Panc1 (cell line): ENCODE measurements at regions of chr19 and their contacts with region 1.

Region 1: DNA sequence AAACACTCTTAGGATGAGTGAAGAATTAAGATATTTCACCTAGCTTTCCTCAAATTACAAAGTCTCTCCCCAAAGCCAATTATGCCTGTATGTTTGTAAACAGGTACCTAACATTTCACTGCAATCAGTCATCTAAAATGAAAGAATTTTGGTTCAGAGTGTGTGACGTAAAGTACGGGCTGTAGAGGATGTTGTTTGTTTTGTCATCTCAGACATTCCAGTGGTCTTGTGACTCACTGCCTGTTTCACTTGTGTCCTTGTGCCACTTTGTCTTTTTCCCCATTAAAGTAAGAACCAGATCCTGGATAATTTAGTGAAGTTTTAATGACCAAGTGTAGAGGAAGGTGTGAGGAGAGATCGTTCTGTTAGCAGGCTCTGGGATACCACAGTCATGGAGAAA is 28.6 kb upstream of the EID2 start:
- DNase-seq: peak; percentile 83
- ATAC-seq: peak; percentile 59
- H3K4me3 ChIP-seq: no peak overlapping the region
- H3K27ac ChIP-seq: no peak overlapping the region
- H3K4me1 ChIP-seq: 0 out of 2 replicates have a peak, but pooled peaks cover 5% of the 10 kb centered on the region
- H3K27me3 ChIP-seq: peaks cover 85% of the 10 kb centered on the region
- CTCF ChIP-seq: no peak

Region 2: DNA sequence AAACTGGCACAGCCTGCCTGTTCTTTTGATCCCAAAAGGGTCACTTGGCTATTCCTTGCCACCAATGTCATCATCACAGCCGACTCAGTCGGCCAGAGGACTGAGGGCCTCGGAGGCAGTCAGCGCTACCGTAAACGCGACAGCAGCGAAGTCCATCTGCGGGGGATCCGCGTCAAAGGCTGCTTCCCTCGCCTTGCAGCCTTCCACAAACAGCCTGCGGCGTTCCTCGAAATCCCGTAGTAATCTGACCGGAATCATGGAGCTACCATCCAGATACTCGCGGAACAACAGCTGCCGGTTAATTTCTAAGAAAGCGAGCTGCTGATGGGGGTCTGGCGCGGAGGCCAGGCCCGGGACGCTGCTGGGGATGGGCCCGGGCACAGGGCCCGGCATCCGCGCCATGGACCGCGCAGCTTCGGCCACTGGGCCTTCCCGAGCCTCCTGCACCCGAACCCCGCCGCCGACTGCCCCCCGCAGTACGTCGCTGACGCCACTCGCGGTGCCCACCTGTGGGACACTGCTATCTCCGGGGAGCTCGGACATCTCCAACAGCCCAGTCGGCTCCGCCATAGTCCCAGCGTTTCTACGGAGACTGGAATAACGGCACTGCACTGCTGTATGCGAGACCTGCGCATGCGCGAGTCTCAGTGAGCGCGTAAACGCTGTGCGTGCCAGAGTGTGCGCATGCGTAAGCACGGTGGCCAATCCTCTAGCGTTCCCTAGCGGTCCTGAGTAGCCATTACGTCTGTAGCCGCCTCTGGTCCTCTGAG is 36.2 kb before region 1 on chr19 and contains the start of gene EID2B:
- CTCF ChIA-PET with region 1: no interaction called
- POLR2A ChIA-PET with region 1: no interaction called
- in situ Hi-C with region 1: no loop called
- intact Hi-C with region 1: no loop called
- DNase-seq: peak; percentile 100
- ATAC-seq: peak; percentile 95
- H3K4me3 ChIP-seq: peak within 1 kb of the TSS; percentile 35 to 56
- H3K27ac ChIP-seq: peak within 1 kb of the TSS; percentile 80
- H3K4me1 ChIP-seq: peaks cover 25% of the 10 kb centered on the region
- H3K27me3 ChIP-seq: no peaks in the 10 kb centered on the region
- CTCF ChIP-seq: no peak
- total RNA-seq, gene EID2B: 37.7 TPM

Region 3: GRCh38 chr19:39607026-39607425 is 38.4 kb after region 1 on chr19:
- CTCF ChIA-PET with region 1: interaction called, 11 read pairs
- POLR2A ChIA-PET with region 1: interaction called, 3 read pairs
- in situ Hi-C with region 1: no loop called
- intact Hi-C with region 1: no loop called
- DNase-seq: no peak
- ATAC-seq: no peak
- H3K4me3 ChIP-seq: no peak overlapping the region
- H3K27ac ChIP-seq: no peak overlapping the region
- H3K4me1 ChIP-seq: no peaks in the 10 kb centered on the region
- H3K27me3 ChIP-seq: peaks cover 88% of the 10 kb centered on the region
- CTCF ChIP-seq: peak; percentile 36; the same call in 1 of the 2 replicates